MCF 10A (cell line): ENCODE measurements at regions of chr7 and their contacts with region 1.

Region 1: GRCh38 chr7:157386979-157387800 is 50.4 kb downstream of the DNAJB6 start:
- DNase-seq: peak; percentile 86
- H3K4me3 Mint-ChIP-seq: no peak overlapping the region
- H3K27ac Mint-ChIP-seq: peak overlapping the region; percentile 16
- H3K4me1 Mint-ChIP-seq: peaks cover 8% of the 10 kb centered on the region
- H3K27me3 Mint-ChIP-seq: no peaks in the 10 kb centered on the region
- CTCF ChIP-seq: peak; percentile 86

Region 2: GRCh38 chr7:157228864-157229422 is 158.2 kb before region 1 on chr7:
- CTCF ChIA-PET with region 1: interaction called, 3 read pairs
- POLR2A ChIA-PET with region 1: interaction called, 3 read pairs
- intact Hi-C with region 1: loop called (anchors 2 kb)
- DNase-seq: peak; percentile 42
- H3K4me3 Mint-ChIP-seq: no peak overlapping the region
- H3K27ac Mint-ChIP-seq: no peak overlapping the region
- H3K4me1 Mint-ChIP-seq: peaks cover 5% of the 10 kb centered on the region
- H3K27me3 Mint-ChIP-seq: no peaks in the 10 kb centered on the region
- CTCF ChIP-seq: no peak

Region 3: GRCh38 chr7:157357129-157358040 is 29.8 kb before region 1 on chr7:
- CTCF ChIA-PET with region 1: interaction called, 14 read pairs
- POLR2A ChIA-PET with region 1: interaction called, 3 read pairs
- intact Hi-C with region 1: no loop called
- DNase-seq: no peak
- H3K4me3 Mint-ChIP-seq: no peak overlapping the region
- H3K27ac Mint-ChIP-seq: peak overlapping the region; percentile 61
- H3K4me1 Mint-ChIP-seq: peaks cover 48% of the 10 kb centered on the region
- H3K27me3 Mint-ChIP-seq: no peaks in the 10 kb centered on the region
- CTCF ChIP-seq: no peak

Region 4: DNA sequence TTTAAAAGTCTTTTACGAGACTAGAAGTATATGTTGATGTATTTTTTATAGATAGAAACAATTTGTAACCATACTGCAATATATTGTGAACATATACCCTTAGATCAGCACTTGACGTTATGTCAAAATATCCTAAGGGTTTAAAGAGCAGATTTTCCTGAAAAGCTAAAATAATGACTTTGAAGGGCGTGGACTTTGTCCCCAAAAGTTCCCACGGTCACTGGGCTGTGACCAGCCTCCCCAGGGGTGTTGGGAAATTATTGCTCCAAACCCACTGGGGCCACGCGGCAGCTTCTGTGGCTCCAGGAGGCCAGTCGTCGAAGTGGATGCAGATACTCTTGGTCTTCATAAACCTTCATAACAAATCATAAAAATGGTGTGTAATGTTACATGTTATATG is 20.5 kb before region 1 on chr7:
- CTCF ChIA-PET with region 1: interaction called, 14 read pairs
- POLR2A ChIA-PET with region 1: interaction called, 3 read pairs
- intact Hi-C with region 1: no loop called
- DNase-seq: no peak
- H3K4me3 Mint-ChIP-seq: no peak overlapping the region
- H3K27ac Mint-ChIP-seq: no peak overlapping the region
- H3K4me1 Mint-ChIP-seq: no peaks in the 10 kb centered on the region
- H3K27me3 Mint-ChIP-seq: no peaks in the 10 kb centered on the region
- CTCF ChIP-seq: no peak

Region 5: DNA sequence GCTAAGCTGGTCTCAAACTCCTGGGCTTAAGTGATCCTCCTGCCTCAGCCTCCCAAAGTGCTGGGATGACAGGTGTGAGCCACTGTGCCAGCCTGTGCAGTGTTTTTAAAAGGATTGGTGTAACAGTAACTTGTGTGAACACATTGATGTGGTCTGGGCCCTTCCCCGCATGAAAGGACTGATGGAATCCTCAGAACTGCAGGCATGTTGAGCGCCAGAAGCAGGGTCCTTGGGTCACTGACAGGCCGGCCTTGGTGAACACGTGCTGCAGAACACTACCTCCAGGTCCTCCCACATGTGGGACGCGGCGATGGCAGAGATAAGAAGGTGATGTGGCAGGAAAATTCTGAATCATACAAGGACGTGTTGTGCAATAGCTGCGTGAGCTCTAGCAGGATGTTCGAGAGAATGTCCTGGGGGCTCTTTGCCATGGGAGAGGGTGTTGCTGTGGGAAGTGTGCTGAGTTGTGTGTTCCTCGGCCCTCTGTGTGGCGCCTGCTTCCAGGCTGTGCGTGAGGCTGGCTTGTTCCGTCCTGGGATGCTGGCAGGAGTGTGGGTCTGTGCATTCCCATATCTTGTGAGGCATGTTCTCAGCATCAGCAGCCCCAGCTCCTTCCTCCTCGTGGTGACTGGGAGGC is 17.8 kb after region 1 on chr7:
- CTCF ChIA-PET with region 1: interaction called, 10 read pairs
- POLR2A ChIA-PET with region 1: interaction called, 3 read pairs
- intact Hi-C with region 1: no loop called
- DNase-seq: peak; percentile 94
- H3K4me3 Mint-ChIP-seq: no peak overlapping the region
- H3K27ac Mint-ChIP-seq: peak overlapping the region; percentile 84
- H3K4me1 Mint-ChIP-seq: peaks cover 22% of the 10 kb centered on the region
- H3K27me3 Mint-ChIP-seq: no peaks in the 10 kb centered on the region
- CTCF ChIP-seq: no peak

Region 6: GRCh38 chr7:157719008-157719682 is 332.0 kb after region 1 on chr7:
- CTCF ChIA-PET with region 1: no interaction called
- POLR2A ChIA-PET with region 1: no interaction called
- intact Hi-C with region 1: no loop called
- DNase-seq: no peak
- H3K4me3 Mint-ChIP-seq: no peak overlapping the region
- H3K27ac Mint-ChIP-seq: no peak overlapping the region
- H3K4me1 Mint-ChIP-seq: no peaks in the 10 kb centered on the region
- H3K27me3 Mint-ChIP-seq: no peaks in the 10 kb centered on the region
- CTCF ChIP-seq: no peak